ENCODE measurements at regions of chr15 and their contacts with region 1.

Region 1: DNA sequence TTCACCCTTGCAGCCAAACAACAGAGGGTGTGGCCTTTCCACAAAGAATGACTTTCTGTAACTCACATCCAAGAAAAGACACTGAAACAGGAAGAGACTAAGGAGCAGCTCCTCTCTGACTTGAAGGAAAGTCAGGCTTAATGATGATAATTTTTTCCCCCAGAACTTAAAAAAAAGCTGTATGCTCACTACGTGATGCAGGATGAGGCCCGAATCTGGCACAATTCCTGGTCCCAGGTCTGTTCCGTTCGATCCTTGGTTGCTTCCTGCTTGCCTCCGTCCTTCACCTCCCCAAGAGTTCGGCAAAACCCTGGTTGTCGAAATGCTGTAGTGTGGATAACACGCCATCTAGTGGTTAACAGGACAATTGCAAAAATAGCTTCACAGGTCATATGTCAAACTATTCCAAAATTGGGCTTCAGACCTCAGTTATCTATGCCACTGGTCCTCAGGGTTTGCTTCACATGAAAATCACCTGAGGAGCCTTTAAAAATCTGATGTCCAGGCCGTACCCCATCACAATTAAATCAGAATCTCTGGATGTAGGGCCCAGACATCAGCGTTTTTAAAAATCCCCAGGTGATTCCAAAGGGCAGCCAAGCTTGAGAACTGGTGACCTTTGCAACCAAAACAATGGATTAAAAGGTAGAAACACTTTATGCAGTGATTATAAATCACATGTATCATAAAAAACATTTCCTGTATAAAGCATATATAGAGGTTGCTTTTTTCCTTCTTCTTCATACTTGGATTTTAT is 28.1 kb upstream of the SYNM start:
- DNase-seq: peak; percentile 49 to 51
- ATAC-seq: peak; percentile 87

Region 2: DNA sequence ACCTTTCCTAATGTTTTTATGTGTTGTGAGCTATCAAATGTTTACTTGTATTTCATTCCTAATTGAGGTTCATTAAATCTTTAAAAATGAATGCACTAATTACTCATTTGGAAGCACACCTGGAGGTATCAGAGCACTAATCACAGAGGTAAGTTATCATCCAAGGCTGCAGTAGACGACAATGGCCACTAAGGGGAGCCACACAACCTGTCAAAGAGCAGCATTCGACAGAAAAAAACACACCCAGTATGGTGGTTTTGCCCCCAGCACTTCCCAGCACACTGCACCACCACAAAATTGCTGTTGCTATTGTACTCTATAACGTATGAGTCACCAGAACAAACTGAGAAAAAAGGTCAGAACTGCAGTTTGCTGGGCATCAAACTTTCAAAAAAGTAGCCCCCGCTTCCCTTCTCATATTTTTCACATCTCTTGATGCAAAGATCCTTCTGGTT is 634.3 kb before region 1 on chr15:
- intact Hi-C with region 1: loop called in 1 of 2 experiments (anchors 10 kb)
- DNase-seq: peak in 1 of 2 donors; percentile 49
- ATAC-seq: peak; percentile 65

Region 3: GRCh38 chr15:98689431-98689861 is 387.3 kb before region 1 on chr15:
- intact Hi-C with region 1: no loop called
- DNase-seq: no peak
- ATAC-seq: no peak

Region 4: DNA sequence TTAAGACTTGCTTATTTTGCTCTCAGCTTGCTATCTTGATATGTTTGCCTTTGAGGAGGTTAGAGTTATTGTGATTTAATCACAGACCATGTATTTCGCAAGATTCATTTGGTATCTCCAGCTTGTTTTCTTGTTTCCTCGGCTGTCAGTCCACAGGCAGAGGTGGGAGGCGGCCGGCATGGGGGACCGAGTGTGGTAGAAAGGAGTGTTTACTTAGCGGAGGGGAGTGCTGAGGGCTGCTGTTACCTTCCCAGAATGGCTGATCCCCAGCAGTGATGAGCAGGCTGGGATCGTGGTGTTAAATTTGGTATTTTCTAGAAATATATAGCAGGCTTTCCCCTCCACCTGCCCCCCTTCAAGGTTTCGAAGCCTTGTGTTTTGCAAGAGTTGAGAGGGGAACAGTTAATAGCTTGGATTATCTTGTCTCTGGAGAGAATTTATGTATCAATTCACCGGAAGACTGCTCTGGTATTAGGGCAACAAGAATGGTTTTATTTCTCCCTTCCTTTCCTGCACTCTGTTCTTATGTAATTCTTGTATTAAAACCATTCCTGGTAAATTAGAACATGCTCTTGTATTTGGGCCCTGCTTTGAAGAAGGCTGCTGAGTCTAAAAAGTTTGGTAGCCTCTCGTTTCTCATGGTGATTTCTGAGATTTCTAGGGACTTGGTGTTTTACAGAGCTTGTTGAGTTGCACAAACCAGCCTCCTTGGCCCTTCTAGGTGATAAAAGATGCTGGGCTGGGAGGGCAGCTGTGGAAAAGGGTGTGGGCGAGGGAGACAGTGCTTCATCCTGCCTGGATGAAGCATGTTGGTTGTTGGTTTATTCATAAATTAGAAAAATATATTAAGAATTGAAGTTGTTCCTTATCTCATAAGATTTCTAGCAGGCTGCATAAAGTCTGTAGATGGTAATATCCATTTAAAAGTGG is 277.0 kb before region 1 on chr15:
- intact Hi-C with region 1: loop called in 1 of 2 experiments (anchors 10 kb)
- DNase-seq: no peak
- ATAC-seq: no peak

Measured in left colon (tissue), 2 donors.